Heart right ventricle (tissue), 16 donors: ENCODE measurements at regions of chr1 and their contacts with region 1.

Region 1: DNA sequence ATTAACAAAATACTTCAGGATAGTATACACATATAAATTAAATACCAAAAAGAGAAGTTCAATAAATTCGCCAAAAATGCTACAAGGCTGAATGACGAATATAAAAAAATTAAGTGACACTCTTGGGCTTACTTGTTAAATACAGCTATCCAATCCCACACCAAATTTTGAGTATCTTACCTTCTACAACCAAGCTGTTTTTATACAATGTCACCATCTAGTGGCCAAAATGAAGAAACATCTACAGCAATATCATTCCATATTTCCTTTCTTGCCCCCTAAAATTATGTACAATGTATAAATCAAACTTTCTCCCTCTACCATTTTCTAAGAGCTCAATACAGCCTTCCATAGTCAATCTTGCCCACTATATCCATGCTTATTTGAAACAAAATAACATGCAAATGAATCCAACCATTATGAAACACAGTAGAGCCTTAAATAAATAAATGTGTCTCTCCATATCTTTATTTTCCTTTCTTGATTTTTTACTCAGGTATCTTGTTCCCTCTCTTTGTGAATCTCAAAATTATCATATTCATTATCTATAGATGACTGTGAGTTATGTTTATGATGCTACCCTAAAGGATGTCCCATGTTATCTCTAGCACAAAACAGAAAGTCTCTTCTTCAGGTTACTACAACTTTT is 86.3 kb downstream of the ACBD6 start:
- DNase-seq: no peak
- ATAC-seq: no peak
- H3K4me3 ChIP-seq: no peak overlapping the region
- H3K27ac ChIP-seq: no peak overlapping the region
- H3K4me1 ChIP-seq: no peaks in the 10 kb centered on the region
- H3K27me3 ChIP-seq: no peaks in the 10 kb centered on the region
- CTCF ChIP-seq: peak; percentile 33 to 76 (median 62)

Region 2: GRCh38 chr1:180188091-180188506 is 228.0 kb before region 1 on chr1:
- intact Hi-C with region 1: loop called in 5 of 10 experiments (anchors 10 kb)
- DNase-seq: peak in 1 of 2 donors; percentile 38
- ATAC-seq: peak in 6 of 8 donors; percentile 44 to 65 (median 52)
- H3K4me3 ChIP-seq: no peak overlapping the region
- H3K27ac ChIP-seq: no peak overlapping the region
- H3K4me1 ChIP-seq: no peaks in the 10 kb centered on the region
- H3K27me3 ChIP-seq: no peaks in the 10 kb centered on the region
- CTCF ChIP-seq: peak in 8 of 9 donors; percentile 19 to 66 (median 56)

Region 3: GRCh38 chr1:180198196-180198595 is 217.9 kb before region 1 on chr1:
- intact Hi-C with region 1: loop called in 1 of 10 experiments (anchors 10 kb)
- DNase-seq: no peak
- ATAC-seq: no peak
- H3K4me3 ChIP-seq: no peak overlapping the region
- H3K27ac ChIP-seq: no peak overlapping the region
- H3K4me1 ChIP-seq: no peaks in the 10 kb centered on the region
- H3K27me3 ChIP-seq: no peaks in the 10 kb centered on the region
- CTCF ChIP-seq: no peak

Region 4: DNA sequence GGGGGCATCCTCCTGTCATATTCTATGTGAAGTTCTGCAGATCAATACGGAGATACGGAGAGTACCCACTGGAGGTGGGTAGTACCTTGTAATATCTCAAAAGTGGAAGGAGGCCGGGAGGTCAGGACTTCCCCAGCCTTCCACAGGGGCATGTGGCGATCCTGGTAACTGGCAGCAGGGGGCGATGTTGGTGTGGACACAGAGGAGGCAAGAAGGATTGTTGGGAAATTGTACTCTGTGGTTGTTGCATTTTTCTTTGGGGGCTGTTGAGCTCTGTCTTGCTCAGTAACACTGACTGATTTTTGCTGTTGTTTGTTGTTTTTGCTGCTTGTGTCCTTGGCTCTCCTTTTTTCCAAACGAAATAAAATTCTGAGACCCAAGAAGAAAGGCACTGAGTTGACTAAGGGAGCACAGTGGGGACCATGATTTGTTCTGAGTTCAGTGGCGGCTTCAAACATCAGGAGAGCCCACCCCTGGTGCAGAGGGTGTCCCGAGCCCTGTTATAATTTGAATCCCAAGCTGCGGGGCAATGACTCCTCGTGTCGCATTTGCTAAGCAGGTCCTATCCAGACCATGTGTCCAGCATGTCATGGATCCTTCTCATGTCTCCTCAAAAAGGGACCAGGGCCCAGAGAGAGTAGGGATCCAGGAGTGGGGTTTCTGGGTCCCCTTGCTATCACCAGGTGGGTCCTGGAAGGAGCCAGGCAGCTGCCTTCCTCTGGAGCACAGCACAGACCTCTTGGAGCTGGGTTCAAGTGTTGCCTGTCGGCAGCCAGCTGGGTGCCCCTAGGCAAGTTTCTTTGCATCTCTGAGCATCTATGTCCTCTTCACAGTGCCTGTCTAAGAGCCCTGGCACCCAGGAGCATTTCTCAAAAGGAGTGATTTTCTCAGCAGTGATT is 163.2 kb before region 1 on chr1:
- intact Hi-C with region 1: loop called in 9 of 10 experiments (anchors 1 to 10 kb)
- DNase-seq: peak; percentile 70 to 72
- ATAC-seq: peak in 7 of 8 donors; percentile 31 to 74 (median 53)
- H3K4me3 ChIP-seq: no peak overlapping the region
- H3K27ac ChIP-seq: no peak overlapping the region
- H3K4me1 ChIP-seq: no peaks in the 10 kb centered on the region
- H3K27me3 ChIP-seq: peaks cover 0 to 66% (median 46%) of the 10 kb centered on the region in 7 donors
- CTCF ChIP-seq: peak; percentile 57 to 90 (median 77)

Region 5: GRCh38 chr1:180287988-180288705 is 128.0 kb before region 1 on chr1:
- intact Hi-C with region 1: loop called in 1 of 10 experiments (anchors 10 kb)
- DNase-seq: peak in 1 of 2 donors; percentile 37
- ATAC-seq: peak in 3 of 8 donors; percentile 35 to 49 (median 37)
- H3K4me3 ChIP-seq: no peak overlapping the region
- H3K27ac ChIP-seq: peak overlapping the region in 3 of 10 donors; percentile 1 to 70 (median 10)
- H3K4me1 ChIP-seq: peaks cover 0 to 13% (median 0%) of the 10 kb centered on the region in 9 donors
- H3K27me3 ChIP-seq: no peaks in the 10 kb centered on the region
- CTCF ChIP-seq: no peak